GM23248 (cell line): ENCODE measurements at regions of chr10 and their contacts with region 1.

Region 1: GRCh38 chr10:91635401-91636400 is 2.8 kb upstream of the PPP1R3C start:
- DNase-seq: peak; percentile 93
- H3K4me3 ChIP-seq: 0 out of 2 replicates have a peak overlapping the region, but pooled peaks have one; percentile 19
- H3K27ac ChIP-seq: peak overlapping the region; percentile 41
- H3K4me1 ChIP-seq: peaks cover 24% of the 10 kb centered on the region
- H3K27me3 ChIP-seq: no peaks in the 10 kb centered on the region

Region 2: GRCh38 chr10:91495402-91495801 is 140.3 kb before region 1 on chr10:
- in situ Hi-C with region 1: loop called (anchors 5 kb)
- DNase-seq: peak; percentile 39
- H3K4me3 ChIP-seq: peak overlapping the region; percentile 15; the same call in 1 of the 2 replicates
- H3K27ac ChIP-seq: peak overlapping the region; percentile 6; the same call in 1 of the 2 replicates
- H3K4me1 ChIP-seq: peaks cover 33% of the 10 kb centered on the region
- H3K27me3 ChIP-seq: no peaks in the 10 kb centered on the region